ENCODE measurements at regions of chr3 and their contacts with region 1.

Region 1: DNA sequence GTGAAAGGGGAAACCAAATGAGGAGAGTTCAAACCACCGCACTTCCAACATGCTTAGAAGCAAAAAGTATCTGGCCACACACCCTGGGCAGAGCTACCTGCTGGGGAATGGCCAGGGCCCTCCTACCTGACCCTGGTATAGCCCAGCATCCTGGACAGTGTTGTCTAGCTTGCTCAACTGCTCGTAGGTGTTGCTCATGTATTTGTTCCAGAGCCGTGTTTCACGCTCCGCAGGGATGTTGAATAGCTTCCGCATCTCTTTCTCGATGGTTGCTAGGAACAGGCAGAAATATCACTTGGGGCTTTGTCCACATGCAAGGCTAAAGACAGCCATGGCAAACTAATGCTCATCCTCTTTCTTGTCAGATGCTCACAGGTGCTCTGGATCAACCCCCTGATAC is 15.1 kb downstream of the USP4 start:
- DNase-seq: no peak
- ATAC-seq: no peak
- H3K4me3 ChIP-seq: no peak overlapping the region
- H3K27ac ChIP-seq: no peak overlapping the region
- H3K4me1 ChIP-seq: peaks cover 1% of the 10 kb centered on the region
- H3K27me3 ChIP-seq: no peaks in the 10 kb centered on the region

Region 2: GRCh38 chr3:49035281-49035680 is 289.5 kb before region 1 on chr3:
- intact Hi-C with region 1: loop called in 1 of 4 experiments (anchors 5 kb)
- DNase-seq: no peak
- ATAC-seq: no peak
- H3K4me3 ChIP-seq: no peak overlapping the region
- H3K27ac ChIP-seq: no peak overlapping the region
- H3K4me1 ChIP-seq: no peaks in the 10 kb centered on the region
- H3K27me3 ChIP-seq: no peaks in the 10 kb centered on the region

Region 3: DNA sequence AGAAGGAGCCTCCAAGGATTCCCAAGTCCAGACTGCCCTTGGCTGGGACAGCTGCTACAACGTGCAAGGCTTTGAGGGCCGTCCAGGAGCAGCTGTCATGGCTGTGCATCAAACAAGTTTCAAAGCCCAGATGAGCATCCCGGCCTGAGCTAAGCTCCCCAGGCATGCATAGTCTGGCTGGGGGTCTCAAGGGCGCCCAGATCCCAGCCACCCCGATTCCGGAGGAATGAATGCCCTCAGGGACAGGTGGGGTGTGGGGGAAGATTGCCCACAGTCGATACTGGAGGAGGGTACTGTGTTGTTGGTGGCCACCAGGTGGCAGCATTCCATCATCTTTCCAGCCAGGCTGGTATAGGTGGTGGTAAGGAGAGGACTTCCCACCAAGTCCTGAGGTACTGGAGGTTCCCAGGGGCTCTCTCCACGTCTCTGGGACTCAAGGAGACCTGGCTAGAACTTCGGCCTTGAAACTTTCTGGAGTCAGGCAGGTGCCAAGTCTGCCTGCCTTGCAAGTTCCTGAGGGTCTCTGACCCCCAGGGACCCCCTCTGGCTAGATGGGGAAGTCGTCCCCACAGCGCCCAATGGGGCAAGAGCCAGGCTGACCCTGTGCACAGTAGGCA is 796.8 kb after region 1 on chr3:
- intact Hi-C with region 1: no loop called
- DNase-seq: peak; percentile 81 to 88 (median 85)
- ATAC-seq: peak; percentile 82
- H3K4me3 ChIP-seq: no peak overlapping the region
- H3K27ac ChIP-seq: no peak overlapping the region
- H3K4me1 ChIP-seq: no peaks in the 10 kb centered on the region
- H3K27me3 ChIP-seq: no peaks in the 10 kb centered on the region

Measured in right cardiac atrium (tissue), 5 donors.